Caco-2 (cell line): ENCODE measurements at regions of chr16 and their contacts with region 1.

Region 1: DNA sequence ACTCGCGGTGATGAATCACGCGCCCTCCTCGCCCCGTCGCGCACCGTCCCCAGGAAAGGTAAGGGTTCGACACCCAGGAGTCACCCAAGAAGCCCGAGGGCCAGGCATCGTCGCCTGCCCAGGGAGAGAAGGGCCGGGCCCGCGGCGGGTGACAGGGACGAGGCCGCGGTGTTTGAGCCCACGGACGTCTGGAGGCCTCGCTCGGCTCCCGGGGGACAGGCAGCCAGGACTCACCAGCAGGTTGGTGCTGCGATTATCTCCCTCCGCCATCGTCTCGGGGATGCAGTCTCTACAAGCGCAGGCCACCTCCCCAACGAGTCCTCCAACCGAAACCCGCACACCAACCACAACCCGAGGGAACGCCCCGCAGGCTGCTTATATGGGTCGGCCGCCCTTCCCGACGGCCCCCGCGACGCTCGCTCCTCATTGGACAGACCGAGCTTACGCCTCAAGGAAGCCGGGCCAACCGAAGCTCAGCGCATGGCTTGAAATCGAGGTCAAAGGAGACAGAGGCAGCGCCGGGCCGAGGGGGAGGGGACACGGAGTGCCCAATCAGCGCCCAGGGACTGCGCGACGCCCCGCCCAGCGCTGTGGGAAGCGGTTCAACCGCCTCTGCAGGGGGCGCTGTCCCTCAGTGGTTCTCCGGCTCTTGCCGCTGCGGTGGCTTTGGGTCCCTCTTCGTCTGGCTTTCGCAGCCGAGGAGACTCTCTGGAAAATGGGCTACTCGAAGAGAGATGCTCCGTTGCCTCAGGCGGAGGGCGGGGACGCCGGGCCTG is at the start of gene ARL6IP1:
- DNase-seq: peak; percentile 98 to 99
- H3K4me3 ChIP-seq: peak within 1 kb of the TSS; percentile 85
- H3K4me3 Mint-ChIP-seq: peak within 1 kb of the TSS; percentile 92
- H3K27ac Mint-ChIP-seq: peak within 1 kb of the TSS; percentile 96
- H3K4me1 ChIP-seq: peaks cover 16% of the 10 kb centered on the region
- H3K4me1 Mint-ChIP-seq: peaks cover 18% of the 10 kb centered on the region
- H3K27me3 ChIP-seq: no peaks in the 10 kb centered on the region
- H3K27me3 Mint-ChIP-seq: peaks cover 2% of the 10 kb centered on the region
- CTCF ChIP-seq: peak; percentile 70 to 84
- total RNA-seq, gene ARL6IP1: 193 and 207 TPM in 2 replicates

Region 2: GRCh38 chr16:18789850-18790724 is 11.3 kb before region 1 on chr16 and contains the start of gene RPS15A:
- CTCF ChIA-PET with region 1: interaction called, 30 read pairs
- POLR2A ChIA-PET with region 1: interaction called, 105 read pairs
- intact Hi-C with region 1: no loop called
- DNase-seq: peak; percentile 96 to 98
- H3K4me3 ChIP-seq: peak within 1 kb of the TSS; percentile 73
- H3K4me3 Mint-ChIP-seq: peak within 1 kb of the TSS; percentile 97
- H3K27ac Mint-ChIP-seq: peak within 1 kb of the TSS; percentile 97
- H3K4me1 ChIP-seq: peaks cover 19% of the 10 kb centered on the region
- H3K4me1 Mint-ChIP-seq: peaks cover 15% of the 10 kb centered on the region
- H3K27me3 ChIP-seq: no peaks in the 10 kb centered on the region
- H3K27me3 Mint-ChIP-seq: no peaks in the 10 kb centered on the region
- CTCF ChIP-seq: no peak
- total RNA-seq, gene RPS15A: 1,469 and 1,473 TPM in 2 replicates

Region 3: GRCh38 chr16:18945233-18945632 is 143.8 kb after region 1 on chr16:
- CTCF ChIA-PET with region 1: no interaction called
- POLR2A ChIA-PET with region 1: no interaction called
- intact Hi-C with region 1: no loop called
- DNase-seq: peak in 1 of 2 experiments; percentile 37
- H3K4me3 ChIP-seq: no peak overlapping the region
- H3K4me3 Mint-ChIP-seq: no peak overlapping the region
- H3K27ac Mint-ChIP-seq: no peak overlapping the region
- H3K4me1 ChIP-seq: no peaks in the 10 kb centered on the region
- H3K4me1 Mint-ChIP-seq: no peaks in the 10 kb centered on the region
- H3K27me3 ChIP-seq: no peaks in the 10 kb centered on the region
- H3K27me3 Mint-ChIP-seq: no peaks in the 10 kb centered on the region
- CTCF ChIP-seq: no peak

Region 4: GRCh38 chr16:18969050-18969854 is 167.9 kb after region 1 on chr16:
- CTCF ChIA-PET with region 1: interaction called, 4 read pairs
- POLR2A ChIA-PET with region 1: no interaction called
- intact Hi-C with region 1: loop called (anchors 2 kb)
- DNase-seq: peak; percentile 76 to 84
- H3K4me3 ChIP-seq: no peak overlapping the region
- H3K4me3 Mint-ChIP-seq: peak overlapping the region; percentile 34
- H3K27ac Mint-ChIP-seq: no peak overlapping the region
- H3K4me1 ChIP-seq: peaks cover 7% of the 10 kb centered on the region; the same call in 1 of the 2 replicates
- H3K4me1 Mint-ChIP-seq: peaks cover 12% of the 10 kb centered on the region
- H3K27me3 ChIP-seq: no peaks in the 10 kb centered on the region
- H3K27me3 Mint-ChIP-seq: no peaks in the 10 kb centered on the region
- CTCF ChIP-seq: peak; percentile 84 to 90

Region 5: DNA sequence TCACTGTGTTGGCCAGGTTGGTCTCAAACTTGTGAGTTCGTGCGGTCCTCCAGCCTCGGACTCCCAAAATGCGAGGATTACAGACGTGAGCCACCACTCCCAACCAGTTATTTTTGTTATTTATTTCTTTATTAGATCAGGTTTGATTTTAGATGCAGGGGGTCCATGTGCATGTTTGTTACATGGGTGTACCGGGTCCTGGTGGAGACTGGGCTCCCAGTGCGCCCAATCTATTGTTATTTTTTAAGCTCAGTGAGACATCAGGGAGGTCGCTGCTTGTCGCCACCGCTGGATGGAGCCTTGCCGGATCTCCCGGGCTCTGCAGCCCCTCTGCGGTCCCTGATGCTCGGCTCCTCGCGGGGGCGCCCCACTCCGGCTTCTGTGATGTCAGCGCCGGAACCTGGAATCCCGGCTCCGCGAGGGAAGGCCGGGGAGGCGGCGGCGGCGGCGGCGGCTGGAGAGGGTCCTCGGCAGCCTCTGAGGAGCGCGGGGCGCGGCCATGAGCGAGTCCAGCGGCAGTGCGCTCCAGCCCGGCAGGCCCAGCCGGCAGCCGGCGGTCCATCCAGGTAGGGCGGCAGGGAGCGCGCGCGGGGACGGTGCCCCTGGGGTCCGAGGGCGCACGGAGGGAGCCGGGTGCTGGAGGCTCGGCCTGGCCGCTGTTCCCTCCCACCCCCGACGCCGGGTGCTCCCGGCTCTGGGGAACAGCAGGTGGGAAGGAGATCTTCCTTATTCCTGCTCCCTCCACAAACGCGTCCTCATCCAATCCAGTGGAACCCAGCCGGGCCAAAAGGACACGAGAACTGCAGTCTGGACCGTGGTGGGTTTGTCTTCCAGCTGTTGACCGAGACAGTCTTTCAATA is 182.4 kb after region 1 on chr16 and contains the start of gene TMC7:
- CTCF ChIA-PET with region 1: interaction called, 12 read pairs
- POLR2A ChIA-PET with region 1: interaction called, 3 read pairs
- intact Hi-C with region 1: no loop called
- DNase-seq: peak; percentile 91 to 95
- H3K4me3 ChIP-seq: peak within 1 kb of the TSS; percentile 56
- H3K4me3 Mint-ChIP-seq: peak within 1 kb of the TSS; percentile 72
- H3K27ac Mint-ChIP-seq: peak within 1 kb of the TSS; percentile 35
- H3K4me1 ChIP-seq: no peaks in the 10 kb centered on the region
- H3K4me1 Mint-ChIP-seq: no peaks in the 10 kb centered on the region
- H3K27me3 ChIP-seq: no peaks in the 10 kb centered on the region
- H3K27me3 Mint-ChIP-seq: no peaks in the 10 kb centered on the region
- CTCF ChIP-seq: peak; percentile 63 to 98
- total RNA-seq, gene TMC7: 4.0 and 4.5 TPM in 2 replicates

Region 6: GRCh38 chr16:19014461-19014860 is 213.1 kb after region 1 on chr16:
- CTCF ChIA-PET with region 1: no interaction called
- POLR2A ChIA-PET with region 1: no interaction called
- intact Hi-C with region 1: no loop called
- DNase-seq: no peak
- H3K4me3 ChIP-seq: no peak overlapping the region
- H3K4me3 Mint-ChIP-seq: no peak overlapping the region
- H3K27ac Mint-ChIP-seq: no peak overlapping the region
- H3K4me1 ChIP-seq: no peaks in the 10 kb centered on the region
- H3K4me1 Mint-ChIP-seq: no peaks in the 10 kb centered on the region
- H3K27me3 ChIP-seq: no peaks in the 10 kb centered on the region
- H3K27me3 Mint-ChIP-seq: no peaks in the 10 kb centered on the region
- CTCF ChIP-seq: no peak

Region 7: GRCh38 chr16:19067349-19068236 is 266.2 kb after region 1 on chr16 and contains the start of gene COQ7:
- CTCF ChIA-PET with region 1: interaction called, 9 read pairs
- POLR2A ChIA-PET with region 1: interaction called, 12 read pairs
- intact Hi-C with region 1: no loop called
- DNase-seq: peak; percentile 98
- H3K4me3 ChIP-seq: peak within 1 kb of the TSS; percentile 83
- H3K4me3 Mint-ChIP-seq: peak within 1 kb of the TSS; percentile 83
- H3K27ac Mint-ChIP-seq: peak within 1 kb of the TSS; percentile 98
- H3K4me1 ChIP-seq: no peaks in the 10 kb centered on the region
- H3K4me1 Mint-ChIP-seq: peaks cover 9% of the 10 kb centered on the region
- H3K27me3 ChIP-seq: no peaks in the 10 kb centered on the region
- H3K27me3 Mint-ChIP-seq: no peaks in the 10 kb centered on the region
- CTCF ChIP-seq: no peak
- total RNA-seq, gene COQ7: 15.7 and 17.3 TPM in 2 replicates